ENCODE measurements at regions of chr6 and their contacts with region 1.

Region 1: DNA sequence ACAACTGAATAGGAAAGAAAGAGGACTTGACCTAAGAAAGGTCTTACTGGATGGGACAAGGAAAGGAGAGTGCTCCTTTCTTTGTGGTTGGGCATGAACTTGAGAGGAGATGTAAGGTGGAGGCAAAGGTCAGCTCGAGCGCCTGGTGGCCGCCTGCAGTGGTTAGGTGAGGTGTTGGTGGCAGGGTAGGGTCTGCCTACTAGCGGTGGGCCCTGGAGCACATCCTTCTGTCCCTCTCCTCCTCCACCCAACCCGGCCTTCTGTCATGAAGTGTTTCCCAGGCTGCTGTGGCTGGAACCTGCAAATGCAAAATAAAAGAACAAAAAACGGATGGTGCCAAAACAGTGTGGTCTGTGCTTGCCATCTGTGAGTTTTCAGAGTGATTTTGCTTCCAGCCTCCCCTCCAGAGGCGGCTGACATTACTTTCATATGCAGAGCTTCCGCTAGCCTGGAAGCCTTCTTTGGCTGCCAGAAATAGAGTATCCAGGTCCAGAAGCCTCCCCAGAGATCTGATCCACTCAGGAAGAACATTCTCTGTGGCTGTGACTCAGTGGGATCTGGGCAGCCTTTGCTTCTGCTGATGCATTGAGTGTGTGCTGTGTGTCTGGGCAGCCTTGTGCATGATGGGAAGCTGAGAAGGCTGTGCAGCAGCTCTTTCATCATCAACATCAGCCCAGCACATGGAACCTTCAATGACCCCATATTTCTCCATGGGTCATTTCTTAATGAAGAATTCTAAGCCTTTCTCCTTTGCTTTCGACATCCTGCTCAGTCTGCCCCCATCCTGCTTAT is 79.8 kb upstream of the FAM184A start:
- DNase-seq: no peak
- H3K4me3 ChIP-seq: no peak overlapping the region
- H3K27ac ChIP-seq: peak overlapping the region in 2 of 4 donors; percentile 28 to 49
- H3K4me1 ChIP-seq: peaks cover 4 to 44% (median 39%) of the 10 kb centered on the region in 4 donors
- H3K27me3 ChIP-seq: no peaks in the 10 kb centered on the region
- CTCF ChIP-seq: no peak
- EP300 ChIP-seq: no peak
- POLR2A ChIP-seq: no peak

Region 2: GRCh38 chr6:119110601-119111548 is 47.4 kb before region 1 on chr6:
- intact Hi-C with region 1: no loop called
- DNase-seq: peak; percentile 34
- H3K4me3 ChIP-seq: no peak overlapping the region
- H3K27ac ChIP-seq: no peak overlapping the region
- H3K4me1 ChIP-seq: peaks cover 0 to 12% (median 9%) of the 10 kb centered on the region in 4 donors
- H3K27me3 ChIP-seq: no peaks in the 10 kb centered on the region
- CTCF ChIP-seq: peak; percentile 62 to 73 (median 71)
- EP300 ChIP-seq: no peak
- POLR2A ChIP-seq: no peak

Region 3: DNA sequence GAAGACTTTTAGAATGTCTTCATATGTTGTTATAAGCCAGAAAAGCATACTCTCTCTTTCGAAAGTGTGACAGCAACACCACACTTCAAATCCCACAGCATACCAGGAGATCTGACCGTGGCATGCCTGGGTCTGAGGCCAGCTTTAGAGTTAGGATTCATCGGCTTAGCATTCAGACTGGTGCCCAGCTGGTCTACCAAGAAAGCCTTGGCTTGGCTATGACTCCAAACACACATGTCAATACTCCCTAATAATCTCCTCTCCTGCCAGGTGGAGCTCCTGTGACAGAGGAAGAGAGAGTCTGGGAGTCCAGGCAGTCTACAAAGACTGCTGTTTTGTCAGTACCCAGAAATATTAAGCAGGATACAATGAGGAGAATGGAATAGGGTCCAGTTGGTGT is 268.4 kb after region 1 on chr6:
- intact Hi-C with region 1: no loop called
- DNase-seq: no peak
- H3K4me3 ChIP-seq: no peak overlapping the region
- H3K27ac ChIP-seq: no peak overlapping the region
- H3K4me1 ChIP-seq: no peaks in the 10 kb centered on the region
- H3K27me3 ChIP-seq: no peaks in the 10 kb centered on the region
- CTCF ChIP-seq: no peak
- EP300 ChIP-seq: no peak
- POLR2A ChIP-seq: no peak

Region 4: GRCh38 chr6:119978274-119978889 is 820.1 kb after region 1 on chr6:
- intact Hi-C with region 1: loop called (anchors 10 kb)
- DNase-seq: no peak
- H3K4me3 ChIP-seq: no peak overlapping the region
- H3K27ac ChIP-seq: no peak overlapping the region
- H3K4me1 ChIP-seq: no peaks in the 10 kb centered on the region
- H3K27me3 ChIP-seq: no peaks in the 10 kb centered on the region
- CTCF ChIP-seq: peak; percentile 25 to 50 (median 30)
- EP300 ChIP-seq: no peak
- POLR2A ChIP-seq: no peak

Measured in esophagus muscularis mucosa (tissue), 4 donors.